ENCODE measurements at regions of chr3 and their contacts with region 1.

Region 1: DNA sequence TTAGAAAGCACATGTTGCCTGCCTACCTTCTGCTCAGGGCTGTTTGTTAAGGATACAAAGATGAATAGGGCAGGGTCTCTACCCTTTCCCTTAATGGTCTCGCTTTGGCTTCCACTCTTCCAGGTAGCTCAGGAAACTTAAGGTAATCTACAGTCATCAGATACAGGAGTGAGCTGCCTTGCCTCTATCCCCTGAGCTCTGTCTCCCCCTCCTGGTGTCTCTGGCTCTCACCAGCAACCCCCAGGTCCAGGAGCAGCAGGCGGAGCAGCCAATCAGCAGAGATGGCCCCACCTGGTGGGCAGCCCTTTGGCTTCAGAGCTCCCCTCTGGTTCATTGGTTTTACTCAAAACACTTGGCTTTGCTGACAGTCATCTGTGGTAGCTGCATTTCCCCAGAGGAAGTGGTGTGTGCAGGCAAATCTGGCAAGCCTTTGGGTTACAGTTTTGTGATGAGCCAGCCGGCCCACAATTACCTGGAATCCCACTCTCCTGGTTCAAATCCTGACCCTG is 8.5 kb upstream of the CX3CR1 start:
- DNase-seq: no peak
- H3K4me3 ChIP-seq: no peak overlapping the region
- CTCF ChIP-seq: peak; percentile 93

Region 2: DNA sequence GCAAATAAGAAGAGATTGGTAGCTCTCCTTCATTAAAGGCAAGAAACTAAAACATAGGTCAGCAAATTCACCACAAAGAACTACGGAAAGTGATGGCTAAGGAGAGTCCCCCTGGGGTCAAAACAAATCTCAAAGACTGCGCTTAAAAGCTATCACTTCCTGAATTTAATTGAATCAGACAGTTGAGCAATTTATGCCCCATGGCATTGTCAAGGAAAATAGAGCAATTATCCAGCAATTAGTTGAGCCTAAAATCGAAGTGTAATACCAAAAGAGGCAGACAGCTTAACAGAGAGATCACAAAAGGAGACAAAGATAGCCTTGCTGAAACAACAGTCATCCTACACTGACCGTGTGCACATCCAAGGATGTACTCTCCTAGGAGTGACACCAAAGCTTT is 397.9 kb before region 1 on chr3:
- CTCF ChIA-PET with region 1: no interaction called
- POLR2A ChIA-PET with region 1: no interaction called
- DNase-seq: no peak
- H3K4me3 ChIP-seq: no peak overlapping the region
- CTCF ChIP-seq: no peak

Region 3: GRCh38 chr3:39107388-39108199 is 180.8 kb before region 1 on chr3 and contains the starts of genes GORASP1 and TTC21A:
- CTCF ChIA-PET with region 1: interaction called, 41 read pairs
- POLR2A ChIA-PET with region 1: no interaction called
- DNase-seq: no peak
- H3K4me3 ChIP-seq: peak within 1 kb of the TSS; percentile 89
- CTCF ChIP-seq: no peak

Region 4: DNA sequence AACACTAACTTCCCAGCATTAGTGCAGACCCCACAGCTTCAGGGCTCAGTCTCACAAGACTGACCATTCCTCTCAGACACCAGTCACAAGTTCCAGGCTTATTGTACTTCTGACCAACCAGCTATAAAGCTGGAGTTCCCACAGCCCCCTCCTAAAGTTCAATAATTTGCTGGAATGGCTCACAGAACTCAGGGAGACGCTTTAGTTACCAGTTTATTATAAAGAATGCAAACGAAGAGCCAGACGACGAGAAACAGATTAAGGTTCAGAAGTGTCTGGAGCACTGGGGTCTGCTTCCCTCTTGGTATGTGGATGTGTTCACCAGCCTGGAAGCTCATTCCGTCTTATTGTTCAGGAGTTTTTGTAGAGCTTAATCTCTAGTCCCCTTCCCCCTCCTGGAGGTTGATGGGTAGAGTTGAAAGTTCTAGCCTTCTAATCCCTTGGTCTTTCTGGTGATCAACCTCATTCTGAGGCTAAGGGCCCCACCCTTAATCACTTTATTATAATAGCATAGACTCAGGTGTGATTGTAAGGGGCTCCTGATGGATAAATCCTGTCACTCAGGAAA is 130.1 kb before region 1 on chr3:
- CTCF ChIA-PET with region 1: interaction called, 15 read pairs
- POLR2A ChIA-PET with region 1: no interaction called
- DNase-seq: no peak
- H3K4me3 ChIP-seq: no peak overlapping the region
- CTCF ChIP-seq: no peak

Region 5: DNA sequence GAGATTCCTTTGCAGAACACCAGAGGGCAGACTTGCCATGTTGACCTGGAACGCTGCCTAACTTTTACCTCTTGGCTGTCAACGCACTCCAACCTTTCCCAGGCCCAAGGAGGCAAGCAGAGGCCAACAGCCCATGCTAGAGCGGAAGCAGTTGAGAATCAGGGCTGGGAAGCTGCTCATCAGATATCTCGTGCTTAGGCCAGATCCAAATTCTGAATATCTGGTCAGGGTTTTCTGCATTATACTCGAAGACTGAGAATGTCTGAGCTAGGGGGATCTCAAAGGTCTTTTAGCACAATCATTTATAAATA is 98.4 kb before region 1 on chr3:
- CTCF ChIA-PET with region 1: interaction called, 574 read pairs
- POLR2A ChIA-PET with region 1: no interaction called
- DNase-seq: no peak
- H3K4me3 ChIP-seq: no peak overlapping the region
- CTCF ChIP-seq: peak; percentile 82

Region 6: GRCh38 chr3:39249453-39250115 is 38.8 kb before region 1 on chr3:
- CTCF ChIA-PET with region 1: interaction called, 17 read pairs
- POLR2A ChIA-PET with region 1: no interaction called
- DNase-seq: no peak
- H3K4me3 ChIP-seq: no peak overlapping the region
- CTCF ChIP-seq: no peak

Region 7: DNA sequence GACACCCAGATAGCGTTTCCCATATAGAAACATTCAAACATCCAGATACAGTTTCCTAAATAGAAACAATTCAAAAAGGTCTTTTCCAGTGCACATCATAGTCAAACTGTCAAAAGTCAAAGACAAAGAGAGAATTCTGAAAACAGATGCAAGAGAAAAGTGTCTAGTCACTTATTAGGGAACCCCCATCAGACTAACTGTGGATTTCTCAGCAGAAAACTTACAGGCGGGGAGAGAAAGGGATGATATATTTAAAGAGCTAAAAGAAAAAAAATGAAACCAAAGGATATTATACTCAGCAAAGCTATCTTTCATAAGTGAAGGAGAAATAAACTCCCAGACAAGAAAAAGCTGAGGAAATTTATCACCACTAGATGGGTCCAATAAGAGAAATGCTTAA is 13.8 kb after region 1 on chr3:
- CTCF ChIA-PET with region 1: interaction called, 12 read pairs
- POLR2A ChIA-PET with region 1: no interaction called
- DNase-seq: no peak
- H3K4me3 ChIP-seq: no peak overlapping the region
- CTCF ChIP-seq: no peak

Region 8: DNA sequence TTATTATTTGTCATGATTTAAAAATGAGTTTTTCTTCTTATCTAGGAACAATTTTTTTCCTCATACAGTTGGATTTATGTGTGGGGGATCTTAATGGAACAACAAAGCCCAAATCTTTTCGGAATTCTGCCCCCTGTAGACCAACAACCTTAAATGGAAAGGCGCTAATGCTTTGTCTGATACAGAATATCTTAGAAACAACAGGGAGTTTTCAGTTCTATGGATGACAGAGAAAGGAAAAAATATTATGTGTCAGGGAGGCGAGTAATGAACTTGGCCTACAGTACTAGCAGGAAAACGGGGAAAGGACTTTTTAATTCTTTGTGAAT is 179.7 kb after region 1 on chr3:
- CTCF ChIA-PET with region 1: no interaction called
- POLR2A ChIA-PET with region 1: no interaction called
- DNase-seq: no peak
- H3K4me3 ChIP-seq: no peak overlapping the region
- CTCF ChIP-seq: no peak

Region 9: GRCh38 chr3:40546816-40547215 is 1258.5 kb after region 1 on chr3:
- CTCF ChIA-PET with region 1: no interaction called
- POLR2A ChIA-PET with region 1: no interaction called
- DNase-seq: no peak
- H3K4me3 ChIP-seq: no peak overlapping the region
- CTCF ChIP-seq: no peak

Measured in AG04449 (cell line).